ENCODE measurements at regions of chr15 and their contacts with region 1.

Region 1: GRCh38 chr15:97875513-97876280 is 84.8 kb upstream of the ARRDC4 start:
- DNase-seq: peak; percentile 28
- H3K4me3 ChIP-seq: peak overlapping the region in 3 of 4 donors; percentile 18 to 31 (median 21)
- H3K27ac ChIP-seq: peak overlapping the region in 1 of 4 donors; percentile 47
- H3K4me1 ChIP-seq: peaks cover 0 to 5% (median 2%) of the 10 kb centered on the region in 4 donors
- H3K27me3 ChIP-seq: no peaks in the 10 kb centered on the region
- CTCF ChIP-seq: peak in 1 of 5 experiments; percentile 17
- EP300 ChIP-seq: no peak
- POLR2A ChIP-seq: no peak

Region 2: GRCh38 chr15:98292442-98293240 is 416.9 kb after region 1 on chr15:
- in situ Hi-C with region 1: loop called in 1 of 4 experiments (anchors 25 kb)
- intact Hi-C with region 1: no loop called
- DNase-seq: peak; percentile 39
- H3K4me3 ChIP-seq: no peak overlapping the region
- H3K27ac ChIP-seq: no peak overlapping the region
- H3K4me1 ChIP-seq: peaks cover 0 to 9% (median 7%) of the 10 kb centered on the region in 4 donors
- H3K27me3 ChIP-seq: peaks cover 52% of the 10 kb centered on the region
- CTCF ChIP-seq: peak; percentile 39 to 63 (median 56)
- EP300 ChIP-seq: no peak
- POLR2A ChIP-seq: no peak